ENCODE measurements at regions of chr7 and their contacts with region 1.

Region 1: DNA sequence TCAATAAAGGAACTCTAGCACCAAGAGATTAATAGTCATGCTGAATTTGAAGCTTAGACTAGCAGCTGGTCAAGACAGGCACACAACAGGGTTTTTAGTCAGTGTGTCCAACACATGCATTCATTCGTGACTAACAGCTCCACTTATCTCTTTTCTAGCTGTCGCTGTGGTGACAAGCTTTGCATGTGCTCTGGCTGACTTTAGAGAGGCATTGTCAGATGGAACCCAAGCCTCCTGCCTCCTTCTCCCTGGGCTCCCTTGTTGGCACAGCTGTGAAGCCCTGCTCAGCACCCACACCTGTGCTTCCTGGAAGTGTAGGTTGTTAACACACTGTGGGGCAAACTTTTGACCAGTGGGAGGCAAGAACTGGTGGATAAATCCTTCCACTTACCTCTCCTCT is 9.8 kb upstream of the AGK start:
- DNase-seq: no peak
- ATAC-seq: peak in 3 of 8 donors; percentile 41 to 61 (median 59)
- H3K4me3 ChIP-seq: no peak overlapping the region
- H3K27ac ChIP-seq: no peak overlapping the region
- H3K4me1 ChIP-seq: no peaks in the 10 kb centered on the region
- H3K27me3 ChIP-seq: peaks cover 0 to 8% (median 0%) of the 10 kb centered on the region in 7 donors
- CTCF ChIP-seq: no peak

Region 2: DNA sequence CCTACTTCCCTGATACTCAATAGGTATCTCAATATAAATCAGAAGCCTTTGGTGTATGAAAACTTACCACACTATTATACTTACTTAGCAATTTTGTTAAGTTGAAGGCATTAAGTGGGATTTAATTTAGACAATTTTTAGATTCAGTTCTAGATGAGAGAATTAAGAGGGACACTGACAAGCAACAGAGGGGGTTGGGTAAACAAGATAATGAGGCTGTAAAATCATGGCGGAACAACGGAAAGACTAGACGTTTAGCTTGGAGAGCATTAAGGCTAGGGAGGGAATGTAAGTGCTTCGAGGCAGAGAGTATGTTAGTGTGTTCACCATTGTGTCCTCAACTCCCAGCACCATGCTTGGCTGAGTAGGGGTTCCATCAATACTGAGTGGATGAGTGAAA is 89.2 kb after region 1 on chr7:
- intact Hi-C with region 1: loop called in 1 of 10 experiments (anchors 10 kb)
- DNase-seq: no peak
- ATAC-seq: no peak
- H3K4me3 ChIP-seq: no peak overlapping the region
- H3K27ac ChIP-seq: no peak overlapping the region
- H3K4me1 ChIP-seq: peaks cover 0 to 8% (median 0%) of the 10 kb centered on the region in 9 donors
- H3K27me3 ChIP-seq: no peaks in the 10 kb centered on the region
- CTCF ChIP-seq: no peak

Measured in heart right ventricle (tissue), 16 donors.